ENCODE measurements at regions of chr2 and their contacts with region 1.

Region 1: DNA sequence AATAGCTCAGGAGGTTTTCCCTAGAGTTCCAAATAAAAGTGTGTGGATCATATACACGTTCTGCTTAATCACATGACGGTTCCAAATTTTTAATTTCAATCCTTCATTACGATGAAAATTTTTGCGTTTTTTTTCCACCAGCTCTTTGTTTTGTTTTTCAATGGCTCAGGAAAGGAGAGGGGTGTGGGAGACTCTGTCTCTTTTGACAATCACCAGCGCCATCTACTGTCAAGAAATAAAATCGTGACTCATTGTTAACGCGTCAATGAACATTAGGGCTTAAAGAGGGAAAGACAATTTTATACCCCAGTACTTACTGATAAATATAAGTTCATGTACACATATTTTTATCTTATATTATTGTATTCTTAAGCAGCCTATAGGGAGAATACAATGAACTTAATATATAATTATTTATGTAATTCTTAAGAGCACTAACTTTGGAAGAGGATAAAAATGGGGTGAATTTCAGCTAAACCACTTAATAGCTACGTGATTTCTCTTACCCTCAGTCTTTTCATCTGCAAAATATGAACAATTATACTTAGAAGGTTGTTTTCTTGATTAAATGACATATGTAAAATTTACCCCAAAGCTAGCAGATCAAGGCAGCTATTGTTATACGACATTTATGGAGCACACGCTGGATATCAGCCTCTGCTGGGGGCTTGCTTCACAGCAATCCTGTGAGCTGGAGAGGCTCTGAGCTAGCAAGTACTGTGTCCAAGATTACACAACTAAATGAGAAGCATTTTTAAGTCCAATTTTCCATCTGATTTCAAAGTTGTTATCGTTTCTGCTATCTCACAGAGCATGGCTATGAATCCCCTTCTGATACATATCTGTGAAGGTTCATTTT is 47.4 kb upstream of the RMDN2 start:
- DNase-seq: peak; percentile 75
- H3K4me3 ChIP-seq: peak overlapping the region in 1 of 2 experiments; percentile 7; a peak in 1 of 4 replicates
- H3K27ac ChIP-seq: peak overlapping the region in 1 of 2 experiments; percentile 77; a peak in 2 of 4 replicates
- H3K4me1 ChIP-seq: peaks cover 0 to 23% of the 10 kb centered on the region in 2 experiments; a peak in 2 of 4 replicates
- H3K27me3 ChIP-seq: no peaks in the 10 kb centered on the region
- CTCF ChIP-seq: peak; percentile 91
- EP300 ChIP-seq: no peak; a peak in 1 of 4 replicates
- RAD21 ChIP-seq: peak; percentile 99

Region 2: GRCh38 chr2:37376421-37377186 is 501.1 kb before region 1 on chr2:
- CTCF ChIA-PET with region 1: interaction called, 12 read pairs
- POLR2A ChIA-PET with region 1: no interaction called
- DNase-seq: no peak
- H3K4me3 ChIP-seq: no peak overlapping the region
- H3K27ac ChIP-seq: no peak overlapping the region
- H3K4me1 ChIP-seq: no peaks in the 10 kb centered on the region
- H3K27me3 ChIP-seq: no peaks in the 10 kb centered on the region
- CTCF ChIP-seq: no peak
- EP300 ChIP-seq: no peak
- RAD21 ChIP-seq: no peak

Region 3: DNA sequence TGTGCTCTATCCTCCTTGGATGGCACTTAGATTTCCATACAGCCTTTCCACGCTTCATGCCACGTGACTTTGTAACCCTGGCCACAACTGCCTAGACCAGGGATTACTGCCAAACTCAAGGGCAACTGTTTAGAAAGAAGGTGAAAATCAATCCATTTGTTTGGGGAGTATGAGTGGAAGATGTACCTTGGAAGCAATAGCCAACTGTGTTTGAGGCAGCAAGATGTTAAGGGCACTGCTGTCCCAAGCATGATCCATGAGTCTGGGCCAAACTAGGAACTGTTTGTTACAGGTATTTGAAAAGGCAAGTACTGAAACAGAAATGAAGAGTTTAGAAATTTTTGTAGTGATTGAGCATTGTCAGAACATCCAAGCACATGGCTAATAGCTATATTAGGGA is 345.2 kb before region 1 on chr2:
- CTCF ChIA-PET with region 1: no interaction called
- POLR2A ChIA-PET with region 1: no interaction called
- DNase-seq: no peak
- H3K4me3 ChIP-seq: no peak overlapping the region
- H3K27ac ChIP-seq: no peak overlapping the region
- H3K4me1 ChIP-seq: peaks cover 0 to 2% of the 10 kb centered on the region in 2 experiments; a peak in 1 of 4 replicates
- H3K27me3 ChIP-seq: no peaks in the 10 kb centered on the region
- CTCF ChIP-seq: no peak
- EP300 ChIP-seq: no peak
- RAD21 ChIP-seq: no peak

Region 4: DNA sequence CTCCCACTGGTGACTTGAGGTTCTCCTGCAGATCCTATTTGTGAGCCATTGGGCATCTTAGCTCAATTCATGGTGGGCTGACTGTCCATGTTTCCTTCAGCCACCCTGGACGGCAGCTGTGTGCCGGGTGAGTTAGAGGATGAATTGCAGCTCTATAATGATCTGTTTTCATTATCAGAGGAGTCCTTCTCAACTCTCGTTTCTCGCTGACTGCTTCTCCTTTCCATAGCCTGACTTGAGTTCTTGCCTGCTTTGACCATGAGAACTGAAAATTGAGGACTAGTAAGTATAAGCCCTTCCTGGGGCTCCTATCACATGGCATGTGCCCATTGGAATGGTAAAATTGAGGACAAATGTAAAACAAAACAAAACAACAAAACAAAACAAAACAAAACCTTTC is 328.1 kb before region 1 on chr2:
- CTCF ChIA-PET with region 1: interaction called, 25 read pairs
- POLR2A ChIA-PET with region 1: interaction called, 6 read pairs
- DNase-seq: no peak
- H3K4me3 ChIP-seq: no peak overlapping the region
- H3K27ac ChIP-seq: no peak overlapping the region
- H3K4me1 ChIP-seq: peaks cover 0 to 30% of the 10 kb centered on the region in 2 experiments; a peak in 2 of 4 replicates
- H3K27me3 ChIP-seq: no peaks in the 10 kb centered on the region
- CTCF ChIP-seq: no peak
- EP300 ChIP-seq: no peak
- RAD21 ChIP-seq: no peak

Region 5: DNA sequence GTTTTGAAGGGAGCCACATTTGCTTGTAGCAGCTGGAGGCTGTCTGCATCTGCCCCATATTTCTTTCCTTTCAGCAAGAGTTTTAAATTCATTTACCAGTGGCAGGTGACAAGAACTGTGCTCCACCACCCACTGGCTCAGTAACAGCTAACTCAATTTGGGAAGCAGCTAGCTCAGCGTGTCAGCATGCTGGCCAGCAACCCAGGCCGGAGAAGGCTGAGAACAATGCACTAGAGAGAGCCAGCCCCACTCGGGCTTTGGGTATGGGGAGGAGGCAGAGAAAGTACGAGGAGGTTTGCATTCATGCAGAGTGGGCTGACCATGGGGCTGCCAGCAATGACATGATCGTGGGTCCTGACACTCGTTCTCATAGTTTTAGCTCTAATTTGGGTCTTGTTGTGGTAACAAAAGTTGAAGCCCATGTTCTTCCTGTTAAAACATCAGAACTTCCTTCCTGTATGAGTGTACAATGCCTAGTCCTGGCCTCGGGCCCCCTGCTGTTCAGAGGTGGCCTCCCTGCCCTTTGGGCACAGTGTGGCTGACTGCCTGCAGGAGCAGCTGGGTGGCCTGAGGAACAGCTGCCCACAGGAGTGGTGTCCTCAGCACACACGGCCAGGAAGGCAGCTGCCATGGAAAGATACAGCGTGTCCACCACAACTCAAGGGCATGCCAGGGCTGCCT is 229.2 kb before region 1 on chr2:
- CTCF ChIA-PET with region 1: interaction called, 31 read pairs
- POLR2A ChIA-PET with region 1: interaction called, 3 read pairs
- DNase-seq: no peak
- H3K4me3 ChIP-seq: no peak overlapping the region; a peak in 1 of 4 replicates
- H3K27ac ChIP-seq: peak overlapping the region; percentile 11 to 68; a peak in 3 of 4 replicates
- H3K4me1 ChIP-seq: peaks cover 47 to 50% of the 10 kb centered on the region in 2 experiments
- H3K27me3 ChIP-seq: no peaks in the 10 kb centered on the region
- CTCF ChIP-seq: peak; percentile 10; the same call in 1 of the 2 replicates
- EP300 ChIP-seq: peak in 1 of 2 experiments; percentile 29; a peak in 1 of 4 replicates
- RAD21 ChIP-seq: no peak

Region 6: DNA sequence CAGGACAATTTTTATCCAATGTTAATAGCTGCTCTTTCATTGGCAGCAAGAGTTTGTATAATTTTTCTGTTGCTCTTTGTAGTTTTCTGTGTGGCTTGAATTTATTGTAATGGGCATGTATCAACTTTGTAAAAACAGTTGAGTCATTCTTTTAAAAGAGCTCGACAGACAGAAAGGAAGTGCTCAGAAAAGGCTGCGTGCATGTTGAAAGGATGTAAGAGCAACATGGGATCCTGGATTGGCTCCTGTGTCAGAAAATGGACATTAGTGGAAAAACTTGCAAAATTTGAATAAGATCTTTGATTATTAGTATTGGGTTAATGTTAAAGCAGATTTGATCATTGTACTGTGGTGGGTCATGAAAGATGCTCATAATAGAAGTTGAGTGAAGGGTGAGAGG is 112.9 kb before region 1 on chr2:
- CTCF ChIA-PET with region 1: interaction called, 14 read pairs
- POLR2A ChIA-PET with region 1: no interaction called
- DNase-seq: no peak
- H3K4me3 ChIP-seq: no peak overlapping the region
- H3K27ac ChIP-seq: peak overlapping the region; percentile 53 to 77; a peak in 3 of 4 replicates
- H3K4me1 ChIP-seq: peaks cover 0 to 45% of the 10 kb centered on the region in 2 experiments; a peak in 3 of 4 replicates
- H3K27me3 ChIP-seq: no peaks in the 10 kb centered on the region
- CTCF ChIP-seq: no peak
- EP300 ChIP-seq: no peak
- RAD21 ChIP-seq: no peak

Region 7: GRCh38 chr2:37865640-37866039 is 12.0 kb before region 1 on chr2:
- CTCF ChIA-PET with region 1: interaction called, 71 read pairs
- POLR2A ChIA-PET with region 1: no interaction called
- DNase-seq: no peak
- H3K4me3 ChIP-seq: no peak overlapping the region
- H3K27ac ChIP-seq: no peak overlapping the region
- H3K4me1 ChIP-seq: peaks cover 2 to 20% of the 10 kb centered on the region in 2 experiments; a peak in 2 of 4 replicates
- H3K27me3 ChIP-seq: no peaks in the 10 kb centered on the region
- CTCF ChIP-seq: no peak
- EP300 ChIP-seq: no peak
- RAD21 ChIP-seq: no peak

Region 8: GRCh38 chr2:37925063-37925897 is 47.6 kb after region 1 on chr2 and contains the start of gene RMDN2:
- CTCF ChIA-PET with region 1: interaction called, 18 read pairs
- POLR2A ChIA-PET with region 1: interaction called, 4 read pairs
- DNase-seq: peak; percentile 99
- H3K4me3 ChIP-seq: peak within 1 kb of the TSS; percentile 86 to 89
- H3K27ac ChIP-seq: peak within 1 kb of the TSS; percentile 87 to 99
- H3K4me1 ChIP-seq: peaks cover 3 to 25% of the 10 kb centered on the region in 2 experiments; a peak in 2 of 4 replicates
- H3K27me3 ChIP-seq: no peaks in the 10 kb centered on the region
- CTCF ChIP-seq: peak; percentile 18; the same call in 1 of the 2 replicates
- EP300 ChIP-seq: peak; percentile 5 to 62; a peak in 1 of 4 replicates
- RAD21 ChIP-seq: 0 out of 2 replicates have a peak, but pooled peaks have one; percentile 6
- polyA plus RNA-seq, gene RMDN2: 7.3 and 15.3 TPM in 2 replicates